ENCODE measurements at regions of chr2 and their contacts with region 1.

Region 1: GRCh38 chr2:117771969-117772630 is 42.4 kb upstream of the DDX18 start:
- H3K4me3 ChIP-seq: no peak overlapping the region
- H3K27ac ChIP-seq: no peak overlapping the region
- H3K4me1 ChIP-seq: no peaks in the 10 kb centered on the region
- CTCF ChIP-seq: 0 out of 2 replicates have a peak, but pooled peaks have one; percentile 8

Region 2: GRCh38 chr2:117753857-117754256 is 18.2 kb before region 1 on chr2:
- CTCF ChIA-PET with region 1: interaction called, 11 read pairs
- POLR2A ChIA-PET with region 1: no interaction called
- H3K4me3 ChIP-seq: no peak overlapping the region
- H3K27ac ChIP-seq: no peak overlapping the region
- H3K4me1 ChIP-seq: no peaks in the 10 kb centered on the region
- CTCF ChIP-seq: no peak

Region 3: DNA sequence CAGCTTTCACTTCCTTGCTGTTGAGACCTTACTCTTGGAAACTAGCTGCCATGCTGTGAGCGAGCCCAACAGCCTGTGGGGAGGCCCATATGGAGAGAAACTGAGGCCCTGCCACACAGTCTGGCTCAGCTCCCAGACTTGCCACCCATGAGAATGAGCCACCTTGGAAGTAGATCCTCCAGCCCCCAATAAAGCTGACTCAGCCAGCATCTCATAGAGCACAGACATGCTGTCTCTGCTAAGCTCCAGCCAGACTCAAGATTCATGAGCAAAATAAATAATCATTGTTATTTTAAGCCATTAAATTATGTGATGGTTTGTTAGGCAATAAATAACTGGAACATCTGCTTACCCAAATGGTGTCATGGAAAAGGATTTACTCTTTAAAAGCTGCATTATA is 11.2 kb before region 1 on chr2:
- CTCF ChIA-PET with region 1: interaction called, 12 read pairs
- POLR2A ChIA-PET with region 1: no interaction called
- H3K4me3 ChIP-seq: no peak overlapping the region
- H3K27ac ChIP-seq: no peak overlapping the region
- H3K4me1 ChIP-seq: no peaks in the 10 kb centered on the region
- CTCF ChIP-seq: no peak

Measured in HEK293 (cell line).